ENCODE measurements at regions of chr3 and their contacts with region 1.

Region 1: GRCh38 chr3:105752744-105753415 is 115.9 kb downstream of the CBLB start:
- DNase-seq: peak; percentile 76 to 87 (median 82)
- H3K4me3 ChIP-seq: peak overlapping the region in 1 of 2 donors; percentile 28
- H3K4me3 Mint-ChIP-seq: peak overlapping the region; percentile 64 to 83 (median 76)
- H3K27ac ChIP-seq: peak overlapping the region; percentile 43
- H3K27ac Mint-ChIP-seq: peak overlapping the region; percentile 89 to 99 (median 96)
- H3K4me1 ChIP-seq: peaks cover 95% of the 10 kb centered on the region
- H3K4me1 Mint-ChIP-seq: peaks cover 52 to 88% (median 66%) of the 10 kb centered on the region in 4 donors
- H3K27me3 ChIP-seq: no peaks in the 10 kb centered on the region
- H3K27me3 Mint-ChIP-seq: no peaks in the 10 kb centered on the region

Region 2: GRCh38 chr3:105369500-105370371 is 383.1 kb before region 1 on chr3:
- CTCF ChIA-PET with region 1: no interaction called
- POLR2A ChIA-PET with region 1: no interaction called
- intact Hi-C with region 1: loop called (anchors 2 kb)
- DNase-seq: peak; percentile 60 to 68 (median 63)
- H3K4me3 ChIP-seq: peak overlapping the region; percentile 67 to 80
- H3K4me3 Mint-ChIP-seq: peak overlapping the region; percentile 91 to 97 (median 96)
- H3K27ac ChIP-seq: peak overlapping the region; percentile 83
- H3K27ac Mint-ChIP-seq: peak overlapping the region; percentile 97 to 99 (median 99)
- H3K4me1 ChIP-seq: peaks cover 21% of the 10 kb centered on the region
- H3K4me1 Mint-ChIP-seq: peaks cover 13 to 45% (median 26%) of the 10 kb centered on the region in 4 donors
- H3K27me3 ChIP-seq: no peaks in the 10 kb centered on the region
- H3K27me3 Mint-ChIP-seq: peaks cover 2 to 14% of the 10 kb centered on the region in 2 donors

Region 3: DNA sequence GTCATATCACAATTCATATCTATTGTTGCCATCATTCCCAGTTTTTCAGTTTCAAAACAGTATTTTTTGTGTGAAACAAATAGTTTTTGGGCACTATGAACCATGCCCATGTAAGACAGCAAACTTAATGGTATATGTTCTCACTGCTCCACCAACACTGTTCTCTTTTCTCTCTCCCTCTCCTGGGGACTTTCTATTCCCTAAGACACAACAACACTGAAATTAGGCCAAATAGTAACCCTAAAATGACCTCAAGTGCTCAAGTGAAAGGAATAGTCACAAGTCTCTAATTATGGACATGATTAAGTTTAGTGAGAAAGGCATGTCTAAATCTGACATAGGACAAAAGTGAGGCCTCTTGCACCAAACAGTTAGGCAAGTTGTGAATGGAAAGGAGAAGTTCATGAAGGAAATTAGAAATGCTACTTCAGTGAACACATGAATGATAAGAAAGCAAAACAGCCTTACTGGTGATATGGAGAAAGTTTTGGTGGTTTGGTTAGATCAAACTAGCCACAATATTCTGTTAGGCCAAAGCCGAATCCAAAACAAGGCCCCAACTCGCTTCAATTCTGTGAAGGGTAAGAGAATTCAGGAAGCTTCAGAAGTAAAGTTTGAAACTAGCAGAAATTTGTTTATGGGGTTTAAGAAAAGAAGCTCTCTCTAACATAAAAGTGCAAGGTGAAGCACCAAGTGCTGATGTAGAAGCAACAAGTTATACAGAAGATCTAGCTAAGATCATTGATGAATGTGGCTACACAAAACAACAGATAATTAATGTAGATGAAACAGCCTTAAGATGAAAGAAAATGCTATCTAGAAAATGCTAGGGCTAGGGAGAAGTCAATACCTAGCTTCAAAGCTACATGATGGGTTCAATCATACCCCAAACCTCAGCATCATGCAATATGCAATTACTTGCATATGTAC is 11.8 kb after region 1 on chr3:
- CTCF ChIA-PET with region 1: interaction called, 3 read pairs
- POLR2A ChIA-PET with region 1: interaction called, 9 read pairs
- intact Hi-C with region 1: loop called (anchors 1 kb)
- DNase-seq: peak in 4 of 5 donors; percentile 48 to 54 (median 51)
- H3K4me3 ChIP-seq: no peak overlapping the region
- H3K4me3 Mint-ChIP-seq: peak overlapping the region in 7 of 8 donors; percentile 1 to 76 (median 46)
- H3K27ac ChIP-seq: no peak overlapping the region
- H3K27ac Mint-ChIP-seq: peak overlapping the region; percentile 25 to 93 (median 66)
- H3K4me1 ChIP-seq: peaks cover 50% of the 10 kb centered on the region
- H3K4me1 Mint-ChIP-seq: peaks cover 46 to 76% (median 64%) of the 10 kb centered on the region in 4 donors
- H3K27me3 ChIP-seq: no peaks in the 10 kb centered on the region
- H3K27me3 Mint-ChIP-seq: no peaks in the 10 kb centered on the region

Region 4: GRCh38 chr3:105829871-105830622 is 77.2 kb after region 1 on chr3:
- CTCF ChIA-PET with region 1: interaction called, 3 read pairs
- POLR2A ChIA-PET with region 1: interaction called, 4 read pairs
- intact Hi-C with region 1: loop called (anchors 1 kb)
- DNase-seq: peak; percentile 46 to 71 (median 49)
- H3K4me3 ChIP-seq: no peak overlapping the region
- H3K4me3 Mint-ChIP-seq: peak overlapping the region in 6 of 8 donors; percentile 11 to 64 (median 42)
- H3K27ac ChIP-seq: no peak overlapping the region
- H3K27ac Mint-ChIP-seq: peak overlapping the region; percentile 58 to 94 (median 86)
- H3K4me1 ChIP-seq: peaks cover 73% of the 10 kb centered on the region
- H3K4me1 Mint-ChIP-seq: peaks cover 58 to 80% (median 69%) of the 10 kb centered on the region in 4 donors
- H3K27me3 ChIP-seq: no peaks in the 10 kb centered on the region
- H3K27me3 Mint-ChIP-seq: no peaks in the 10 kb centered on the region

Region 5: DNA sequence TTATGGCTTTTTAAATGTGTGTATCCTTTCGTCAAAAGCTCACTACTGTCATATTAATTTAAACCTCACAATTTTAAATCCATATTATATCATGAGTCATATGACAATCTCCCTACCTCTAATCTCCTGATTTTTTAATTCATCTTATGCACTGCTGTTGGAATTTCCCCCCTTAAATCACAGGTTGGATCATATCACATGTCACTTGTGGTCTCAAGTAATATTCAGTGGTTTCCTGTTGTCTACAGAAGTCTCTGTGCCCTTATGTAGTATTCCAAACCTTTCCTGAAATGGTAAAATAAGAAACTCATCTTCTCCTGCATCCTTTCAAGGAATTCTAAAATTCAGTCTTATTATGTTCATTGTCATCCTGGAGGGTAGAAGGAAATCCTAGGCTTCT is 232.0 kb after region 1 on chr3:
- CTCF ChIA-PET with region 1: no interaction called
- POLR2A ChIA-PET with region 1: no interaction called
- intact Hi-C with region 1: no loop called
- DNase-seq: no peak
- H3K4me3 ChIP-seq: no peak overlapping the region
- H3K4me3 Mint-ChIP-seq: peak overlapping the region in 6 of 8 donors; percentile 9 to 63 (median 37)
- H3K27ac ChIP-seq: no peak overlapping the region
- H3K27ac Mint-ChIP-seq: no peak overlapping the region
- H3K4me1 ChIP-seq: peaks cover 15% of the 10 kb centered on the region
- H3K4me1 Mint-ChIP-seq: peaks cover 24 to 45% (median 31%) of the 10 kb centered on the region in 4 donors
- H3K27me3 ChIP-seq: no peaks in the 10 kb centered on the region
- H3K27me3 Mint-ChIP-seq: no peaks in the 10 kb centered on the region

Region 6: DNA sequence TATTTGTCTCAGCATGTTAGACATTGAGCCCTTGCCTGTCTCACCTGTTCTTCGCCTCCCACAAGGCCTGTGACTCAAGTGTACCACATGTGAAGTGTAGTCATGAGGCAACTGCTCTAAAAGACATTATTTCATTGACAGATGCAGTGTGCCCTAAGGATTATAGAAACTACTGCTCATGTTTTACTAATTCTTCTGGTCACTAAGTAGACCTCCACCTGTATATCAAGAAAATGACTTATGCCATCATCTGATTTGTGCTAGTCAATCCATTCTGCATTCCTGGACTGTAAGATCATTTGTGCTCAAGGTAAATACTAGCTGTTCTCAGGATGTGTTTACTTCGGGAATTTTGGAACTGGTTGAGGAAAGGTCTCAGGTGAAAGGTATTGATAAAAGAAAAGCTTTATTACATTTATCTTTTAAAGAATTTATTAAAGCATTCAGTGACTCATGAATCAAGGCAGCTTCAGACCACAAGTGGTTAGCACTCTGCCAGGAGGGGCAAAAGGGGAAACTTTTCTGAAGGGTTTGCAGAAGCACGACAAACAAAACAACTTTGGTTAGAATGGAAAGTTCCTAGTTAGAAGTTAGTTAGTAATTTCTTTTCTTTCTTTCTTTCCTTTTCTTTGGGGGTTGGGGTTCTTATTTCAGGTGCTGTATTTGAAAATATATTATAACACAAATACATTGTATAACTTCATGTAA is 581.2 kb after region 1 on chr3:
- CTCF ChIA-PET with region 1: no interaction called
- POLR2A ChIA-PET with region 1: no interaction called
- intact Hi-C with region 1: loop called (anchors 5 kb)
- DNase-seq: peak in 4 of 5 donors; percentile 17 to 66 (median 28)
- H3K4me3 ChIP-seq: peak overlapping the region in 1 of 2 donors; percentile 8
- H3K4me3 Mint-ChIP-seq: peak overlapping the region; percentile 14 to 71 (median 56)
- H3K27ac ChIP-seq: no peak overlapping the region
- H3K27ac Mint-ChIP-seq: peak overlapping the region; percentile 25 to 68 (median 43)
- H3K4me1 ChIP-seq: peaks cover 53% of the 10 kb centered on the region
- H3K4me1 Mint-ChIP-seq: peaks cover 37 to 70% (median 50%) of the 10 kb centered on the region in 4 donors
- H3K27me3 ChIP-seq: no peaks in the 10 kb centered on the region
- H3K27me3 Mint-ChIP-seq: no peaks in the 10 kb centered on the region